Esophagus squamous epithelium (tissue), 5 donors: ENCODE measurements at regions of chr20 and their contacts with region 1.

Region 1: DNA sequence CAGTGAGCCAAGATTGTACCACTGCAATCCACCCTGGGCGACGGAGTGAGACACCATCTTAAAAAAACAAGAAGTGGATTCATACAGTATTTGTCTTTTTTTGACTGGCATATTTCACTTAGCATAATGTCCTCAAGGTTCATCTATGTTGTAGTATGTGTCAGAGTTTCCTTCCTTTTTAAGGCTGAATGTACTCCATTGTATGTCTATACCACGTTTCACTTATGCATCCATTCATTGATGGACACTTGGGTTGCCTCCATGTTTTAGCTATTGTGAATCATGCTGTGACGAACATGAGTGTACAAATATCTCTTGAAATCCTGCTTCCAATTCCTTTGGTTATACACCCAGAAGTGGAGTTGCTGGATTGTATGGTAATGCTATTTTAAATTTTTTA is 28.9 kb upstream of the FAM83D start:
- DNase-seq: no peak
- H3K4me3 ChIP-seq: no peak overlapping the region
- H3K27ac ChIP-seq: no peak overlapping the region
- H3K4me1 ChIP-seq: peaks cover 5 to 15% (median 7%) of the 10 kb centered on the region in 3 donors
- H3K27me3 ChIP-seq: peaks cover 0 to 34% (median 0%) of the 10 kb centered on the region in 4 donors
- CTCF ChIP-seq: no peak
- POLR2A ChIP-seq: no peak

Region 2: DNA sequence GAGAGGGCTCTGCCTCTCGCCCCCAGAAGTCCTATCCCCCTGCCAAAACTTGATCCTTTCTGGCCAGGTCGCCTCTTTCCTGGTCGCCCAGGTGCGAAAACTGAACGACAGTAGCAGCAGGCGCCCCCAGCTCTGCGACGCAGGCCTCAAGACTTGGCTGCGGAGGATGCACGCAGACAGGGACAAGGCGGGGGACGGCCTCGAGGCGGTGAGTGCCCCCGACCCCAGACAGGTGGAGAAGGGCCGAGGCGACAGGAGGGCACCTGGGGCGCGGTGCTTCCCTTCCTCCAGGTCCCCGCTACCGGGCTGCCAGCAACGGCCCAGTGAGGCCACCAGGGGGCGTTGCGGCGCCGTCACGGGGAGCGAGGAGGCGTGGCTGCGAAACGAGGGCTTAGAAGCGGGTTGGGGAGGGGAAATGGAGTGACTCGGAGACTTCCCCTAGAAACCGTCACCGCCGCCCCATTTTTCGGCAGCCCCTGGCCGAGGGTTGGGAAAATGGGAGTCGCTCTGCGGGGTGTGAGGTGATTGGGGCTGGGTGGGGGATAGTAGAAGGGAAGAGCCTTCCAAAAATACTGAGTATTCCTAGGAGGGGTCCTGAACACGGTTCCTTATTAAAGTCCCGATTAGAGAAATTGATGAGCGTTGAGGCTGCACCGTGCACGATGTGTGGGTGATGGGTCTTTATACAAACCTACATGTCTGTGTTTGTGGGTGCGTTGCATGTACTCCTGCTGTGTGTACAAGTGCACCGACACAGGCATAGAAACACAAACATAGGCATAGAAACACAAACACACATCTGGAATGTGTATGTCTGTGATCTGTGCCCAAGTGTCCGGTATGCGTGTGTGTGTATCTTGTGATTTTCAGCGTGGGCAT is 251.0 kb before region 1 on chr20:
- intact Hi-C with region 1: loop called (anchors 5 kb)
- DNase-seq: peak; percentile 12
- H3K4me3 ChIP-seq: peak overlapping the region in 2 of 4 donors; percentile 15 to 58
- H3K27ac ChIP-seq: no peak overlapping the region
- H3K4me1 ChIP-seq: peaks cover 0 to 12% (median 8%) of the 10 kb centered on the region in 3 donors
- H3K27me3 ChIP-seq: peaks cover 0 to 87% (median 3%) of the 10 kb centered on the region in 4 donors
- CTCF ChIP-seq: peak; percentile 75 to 97 (median 95)
- POLR2A ChIP-seq: no peak

Region 3: DNA sequence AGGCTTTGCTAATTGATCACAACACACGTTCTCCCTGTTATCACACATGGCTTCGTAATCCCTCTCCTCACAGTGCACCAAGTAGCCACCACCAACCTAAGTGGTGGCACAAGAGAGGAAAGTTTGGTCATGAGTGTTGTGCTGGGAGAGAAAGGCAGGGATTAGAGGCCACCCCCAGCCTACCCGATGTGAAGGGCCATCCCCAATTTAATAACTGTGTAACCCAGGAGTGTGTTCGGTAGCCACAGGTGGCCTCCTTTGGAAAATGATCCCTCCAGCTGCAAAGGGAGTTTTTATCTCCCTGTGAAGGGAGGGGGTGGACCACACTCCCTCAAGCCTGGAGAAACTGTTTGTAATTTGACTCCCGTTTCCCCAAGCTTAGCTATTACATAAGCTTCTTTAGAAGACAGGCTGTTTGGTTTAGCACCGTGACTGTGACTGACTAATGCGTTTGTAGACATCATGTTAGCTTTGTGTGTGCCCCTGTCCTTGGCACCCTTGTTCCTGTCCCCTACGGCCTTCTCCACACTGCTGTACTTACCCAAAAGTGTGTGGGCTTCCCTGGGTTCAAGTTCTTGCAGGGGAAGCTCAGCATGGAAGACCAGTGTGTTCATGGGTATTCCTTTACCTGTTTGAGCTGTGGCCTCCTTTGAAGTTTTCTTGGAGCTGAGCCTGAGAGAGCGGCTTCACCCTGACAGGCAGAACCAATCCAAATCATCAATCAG is 71.2 kb before region 1 on chr20:
- intact Hi-C with region 1: no loop called
- DNase-seq: no peak
- H3K4me3 ChIP-seq: no peak overlapping the region
- H3K27ac ChIP-seq: no peak overlapping the region
- H3K4me1 ChIP-seq: peaks cover 4 to 44% (median 25%) of the 10 kb centered on the region in 3 donors
- H3K27me3 ChIP-seq: peaks cover 0 to 19% (median 0%) of the 10 kb centered on the region in 4 donors
- CTCF ChIP-seq: no peak
- POLR2A ChIP-seq: no peak

Region 4: DNA sequence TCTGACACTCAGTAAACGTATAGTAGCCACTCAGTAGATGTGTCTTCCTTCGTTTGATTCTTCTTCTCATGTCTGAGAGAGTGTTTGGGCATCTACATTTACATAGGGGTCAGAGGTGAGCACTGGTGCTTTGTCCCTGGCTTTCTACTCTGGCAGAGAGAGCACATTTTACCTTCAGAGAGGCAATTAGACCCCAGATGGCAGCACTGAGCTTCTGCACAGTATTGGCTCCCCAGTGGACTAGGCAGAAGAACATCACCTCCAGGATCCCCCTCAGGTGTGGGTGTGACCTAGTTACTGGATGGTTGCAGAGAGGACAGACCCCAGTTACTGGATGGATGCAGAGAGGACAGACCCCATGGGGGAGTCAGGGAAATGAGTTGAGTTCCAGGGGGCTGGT is 392.0 kb after region 1 on chr20:
- intact Hi-C with region 1: no loop called
- DNase-seq: no peak
- H3K4me3 ChIP-seq: no peak overlapping the region
- H3K27ac ChIP-seq: no peak overlapping the region
- H3K4me1 ChIP-seq: peaks cover 5 to 21% (median 8%) of the 10 kb centered on the region in 3 donors
- H3K27me3 ChIP-seq: no peaks in the 10 kb centered on the region
- CTCF ChIP-seq: peak in 3 of 6 experiments; percentile 9 to 46 (median 19)
- POLR2A ChIP-seq: no peak